IMR-90 (cell line): ENCODE measurements at regions of chr4 and their contacts with region 1.

Region 1: DNA sequence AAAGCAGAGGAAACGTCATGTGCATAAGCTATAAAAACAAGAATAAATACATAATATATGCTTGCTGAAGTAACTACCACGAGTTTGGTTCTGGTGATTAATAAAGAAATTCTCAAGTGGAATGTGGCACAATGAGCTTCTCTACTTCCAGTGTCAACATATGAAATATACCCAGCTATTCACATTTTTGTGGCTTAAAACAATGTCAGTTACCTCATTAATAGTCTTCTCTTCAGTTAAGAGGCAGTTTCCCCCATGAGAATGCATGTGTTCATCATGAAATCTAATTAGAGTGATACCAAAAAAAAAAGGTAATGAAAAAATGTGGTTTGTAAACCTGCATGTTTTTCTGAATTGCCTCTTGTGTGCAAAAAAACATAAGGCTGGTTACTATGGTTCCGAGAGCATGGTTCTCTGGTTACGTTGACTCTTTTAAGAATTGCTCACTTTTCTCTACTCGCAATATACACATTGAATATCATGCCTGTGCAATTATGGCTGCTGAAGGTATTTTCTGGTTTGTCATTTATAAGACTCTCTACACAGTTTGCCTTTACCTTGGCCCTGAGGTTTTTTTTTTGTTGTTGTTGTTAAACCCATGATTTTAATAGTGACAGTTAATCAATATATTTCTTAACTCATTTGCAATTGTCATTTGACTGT is 108.2 kb downstream of the PCDH7 start:
- DNase-seq: peak; percentile 18
- ATAC-seq: 0 out of 2 replicates have a peak, but pooled peaks have one; percentile 29
- H3K4me3 ChIP-seq: no peak overlapping the region
- H3K27ac ChIP-seq: no peak overlapping the region
- H3K4me1 ChIP-seq: no peaks in the 10 kb centered on the region
- H3K27me3 ChIP-seq: no peaks in the 10 kb centered on the region
- CTCF ChIP-seq: no peak
- POLR2A ChIP-seq: no peak
- RAD21 ChIP-seq: no peak

Region 2: GRCh38 chr4:30860983-30861382 is 32.6 kb after region 1 on chr4:
- CTCF ChIA-PET with region 1: no interaction called
- POLR2A ChIA-PET with region 1: no interaction called
- dilution Hi-C with region 1: no loop called
- in situ Hi-C with region 1: no loop called
- intact Hi-C with region 1: loop called (anchors 2 kb)
- DNase-seq: no peak
- ATAC-seq: no peak
- H3K4me3 ChIP-seq: no peak overlapping the region
- H3K27ac ChIP-seq: no peak overlapping the region
- H3K4me1 ChIP-seq: peaks cover 5% of the 10 kb centered on the region
- H3K27me3 ChIP-seq: no peaks in the 10 kb centered on the region
- CTCF ChIP-seq: no peak
- POLR2A ChIP-seq: no peak
- RAD21 ChIP-seq: no peak

Region 3: GRCh38 chr4:30962939-30963338 is 134.5 kb after region 1 on chr4:
- CTCF ChIA-PET with region 1: no interaction called
- POLR2A ChIA-PET with region 1: no interaction called
- dilution Hi-C with region 1: no loop called
- in situ Hi-C with region 1: no loop called
- intact Hi-C with region 1: no loop called
- DNase-seq: peak; percentile 88
- ATAC-seq: peak; percentile 82
- H3K4me3 ChIP-seq: no peak overlapping the region
- H3K27ac ChIP-seq: no peak overlapping the region
- H3K4me1 ChIP-seq: no peaks in the 10 kb centered on the region
- H3K27me3 ChIP-seq: no peaks in the 10 kb centered on the region
- CTCF ChIP-seq: no peak
- POLR2A ChIP-seq: no peak
- RAD21 ChIP-seq: no peak